ENCODE measurements at regions of chr10 and their contacts with region 1.

Region 1: GRCh38 chr10:61135276-61135721 is 191.3 kb upstream of the RHOBTB1 start:
- DNase-seq: no peak
- ATAC-seq: no peak

Region 2: GRCh38 chr10:61452655-61453641 is 317.6 kb after region 1 on chr10 and contains the start of gene TMEM26:
- intact Hi-C with region 1: no loop called
- DNase-seq: peak; percentile 78
- ATAC-seq: peak; percentile 68
- total RNA-seq, gene TMEM26: 0.53 TPM

Region 3: DNA sequence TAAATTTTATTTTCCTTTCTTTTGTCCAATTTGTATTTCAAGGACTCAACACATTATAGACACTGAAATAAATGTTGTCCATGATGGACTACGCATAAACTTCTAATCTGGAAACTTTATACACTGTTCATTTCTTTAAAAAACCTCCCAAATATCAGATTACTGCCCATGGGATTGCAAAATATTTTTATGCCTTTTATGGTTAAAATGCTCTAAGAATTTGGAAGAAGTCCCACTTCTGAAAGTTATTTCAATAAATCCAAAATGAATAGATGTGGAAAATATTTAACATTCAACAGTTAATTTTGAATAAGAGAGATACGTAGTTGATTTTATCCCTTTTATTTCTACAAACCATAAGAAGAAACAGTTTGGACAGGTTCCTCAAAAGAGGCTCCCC is 573.5 kb after region 1 on chr10:
- intact Hi-C with region 1: loop called (anchors 5 kb)
- DNase-seq: no peak
- ATAC-seq: no peak

Measured in sciatic nerve (tissue), 2 donors.